Naive thymus-derived CD4-positive, alpha-beta T cell (primary cell): ENCODE measurements at regions of chr10 and their contacts with region 1.

Region 1: GRCh38 chr10:22340362-22341189 is 4.7 kb upstream of the SPAG6 start:
- DNase-seq: peak in 8 of 9 donors; percentile 41 to 80 (median 58)
- ATAC-seq: peak; percentile 59
- H3K4me3 ChIP-seq: peak overlapping the region; percentile 41
- H3K4me3 Mint-ChIP-seq: peak overlapping the region; percentile 80 to 89 (median 86)
- H3K27ac ChIP-seq: peak overlapping the region; percentile 20
- H3K27ac Mint-ChIP-seq: peak overlapping the region; percentile 56 to 93 (median 89)
- H3K4me1 ChIP-seq: peaks cover 24 to 26% of the 10 kb centered on the region in 2 donors
- H3K4me1 Mint-ChIP-seq: peaks cover 0 to 54% (median 18%) of the 10 kb centered on the region in 7 donors
- H3K27me3 ChIP-seq: peaks cover 51 to 91% of the 10 kb centered on the region in 2 donors
- H3K27me3 Mint-ChIP-seq: peaks cover 59 to 79% (median 74%) of the 10 kb centered on the region in 5 donors

Region 2: DNA sequence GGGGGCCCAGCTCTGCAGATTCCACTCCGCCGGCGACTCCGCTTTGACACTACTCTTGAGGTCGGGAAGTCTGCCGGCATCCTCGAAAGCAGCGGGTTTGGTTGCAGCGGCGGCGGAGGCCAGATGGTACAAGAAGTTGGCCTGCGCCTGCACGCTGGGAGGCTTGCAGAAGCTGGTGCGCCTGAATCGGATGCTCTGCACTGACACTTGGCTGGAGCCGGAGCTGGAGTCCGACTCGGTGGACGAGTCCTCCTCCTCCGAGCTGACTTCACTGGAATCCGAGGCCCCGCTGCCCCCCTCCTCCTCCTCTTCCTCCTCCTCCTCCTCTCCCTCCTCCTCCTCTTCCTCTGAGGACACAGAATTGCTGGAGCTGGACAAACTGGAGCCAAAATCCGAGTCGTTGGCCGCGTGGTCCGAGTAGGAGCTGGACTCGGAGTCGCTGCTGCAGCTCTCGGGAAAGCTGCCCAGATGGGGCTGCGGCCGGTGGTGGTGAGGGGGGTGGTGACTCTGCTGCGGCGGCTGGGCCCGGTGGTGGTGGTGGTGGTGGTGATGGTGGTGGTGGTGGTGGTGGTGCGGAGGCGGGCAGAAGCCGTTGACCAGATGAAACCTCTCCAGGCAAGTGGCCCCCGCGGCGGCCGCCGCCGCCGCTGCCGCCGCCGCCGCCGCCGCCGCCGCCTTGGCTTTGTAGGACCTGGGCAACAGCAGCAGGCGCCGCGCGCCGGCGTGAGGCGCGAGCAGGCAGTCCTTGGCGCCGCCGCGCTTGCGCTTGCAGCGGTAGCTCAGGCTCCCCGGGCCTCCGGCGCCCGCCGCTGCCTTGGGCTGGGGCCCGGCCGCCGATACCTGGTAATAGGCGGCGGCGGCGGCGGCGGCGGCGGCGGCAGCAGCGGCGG is 824.1 kb before region 1 on chr10:
- CTCF ChIA-PET with region 1: no interaction called
- POLR2A ChIA-PET with region 1: no interaction called
- intact Hi-C with region 1: loop called in 1 of 2 experiments (anchors 5 kb)
- DNase-seq: peak in 8 of 9 donors; percentile 27 to 59 (median 40)
- ATAC-seq: peak; percentile 85
- H3K4me3 ChIP-seq: peak overlapping the region; percentile 28
- H3K4me3 Mint-ChIP-seq: peak overlapping the region; percentile 60 to 87 (median 80)
- H3K27ac ChIP-seq: no peak overlapping the region
- H3K27ac Mint-ChIP-seq: no peak overlapping the region
- H3K4me1 ChIP-seq: peaks cover 29 to 37% of the 10 kb centered on the region in 2 donors
- H3K4me1 Mint-ChIP-seq: peaks cover 17 to 46% (median 41%) of the 10 kb centered on the region in 7 donors
- H3K27me3 ChIP-seq: peaks cover 53 to 57% of the 10 kb centered on the region in 2 donors
- H3K27me3 Mint-ChIP-seq: peaks cover 68 to 86% (median 85%) of the 10 kb centered on the region in 5 donors

Region 3: GRCh38 chr10:22228943-22229801 is 111.4 kb before region 1 on chr10:
- CTCF ChIA-PET with region 1: interaction called, 3 read pairs
- POLR2A ChIA-PET with region 1: interaction called, 7 read pairs
- intact Hi-C with region 1: loop called (anchors 1 kb)
- DNase-seq: peak; percentile 74 to 94 (median 92)
- ATAC-seq: peak; percentile 95
- H3K4me3 ChIP-seq: peak overlapping the region; percentile 85
- H3K4me3 Mint-ChIP-seq: peak overlapping the region; percentile 84 to 99 (median 94)
- H3K27ac ChIP-seq: peak overlapping the region; percentile 70
- H3K27ac Mint-ChIP-seq: peak overlapping the region; percentile 96 to 100 (median 99)
- H3K4me1 ChIP-seq: peaks cover 6 to 8% of the 10 kb centered on the region in 2 donors
- H3K4me1 Mint-ChIP-seq: peaks cover 11 to 27% (median 15%) of the 10 kb centered on the region in 7 donors
- H3K27me3 ChIP-seq: no peaks in the 10 kb centered on the region
- H3K27me3 Mint-ChIP-seq: peaks cover 0 to 20% (median 5%) of the 10 kb centered on the region in 5 donors

Region 4: GRCh38 chr10:22325272-22326144 is 15.1 kb before region 1 on chr10:
- CTCF ChIA-PET with region 1: interaction called, 4 read pairs
- POLR2A ChIA-PET with region 1: interaction called, 16 read pairs
- intact Hi-C with region 1: loop called (anchors 2 kb)
- DNase-seq: peak; percentile 64 to 85 (median 80)
- ATAC-seq: peak; percentile 59
- H3K4me3 ChIP-seq: peak overlapping the region; percentile 44
- H3K4me3 Mint-ChIP-seq: peak overlapping the region; percentile 80 to 94 (median 88)
- H3K27ac ChIP-seq: peak overlapping the region; percentile 72
- H3K27ac Mint-ChIP-seq: peak overlapping the region; percentile 73 to 95 (median 93)
- H3K4me1 ChIP-seq: peaks cover 6 to 17% of the 10 kb centered on the region in 2 donors
- H3K4me1 Mint-ChIP-seq: peaks cover 17 to 43% (median 38%) of the 10 kb centered on the region in 7 donors
- H3K27me3 ChIP-seq: peaks cover 0 to 5% of the 10 kb centered on the region in 2 donors
- H3K27me3 Mint-ChIP-seq: peaks cover 6 to 50% (median 36%) of the 10 kb centered on the region in 5 donors

Region 5: GRCh38 chr10:22475651-22476600 is 135.3 kb after region 1 on chr10:
- CTCF ChIA-PET with region 1: no interaction called
- POLR2A ChIA-PET with region 1: no interaction called
- intact Hi-C with region 1: loop called in 1 of 2 experiments (anchors 5 kb)
- DNase-seq: peak in 5 of 9 donors; percentile 2 to 65 (median 8)
- ATAC-seq: no peak
- H3K4me3 ChIP-seq: peak overlapping the region; percentile 12
- H3K4me3 Mint-ChIP-seq: peak overlapping the region; percentile 82 to 95 (median 88)
- H3K27ac ChIP-seq: no peak overlapping the region
- H3K27ac Mint-ChIP-seq: peak overlapping the region in 2 of 9 donors; percentile 15 to 80
- H3K4me1 ChIP-seq: peaks cover 6 to 7% of the 10 kb centered on the region in 2 donors
- H3K4me1 Mint-ChIP-seq: peaks cover 5 to 25% (median 17%) of the 10 kb centered on the region in 7 donors
- H3K27me3 ChIP-seq: peaks cover 26 to 29% of the 10 kb centered on the region in 2 donors
- H3K27me3 Mint-ChIP-seq: peaks cover 58 to 70% (median 66%) of the 10 kb centered on the region in 5 donors

Region 6: GRCh38 chr10:23192737-23193434 is 852.3 kb after region 1 on chr10:
- CTCF ChIA-PET with region 1: no interaction called
- POLR2A ChIA-PET with region 1: no interaction called
- intact Hi-C with region 1: loop called in 1 of 2 experiments (anchors 10 kb)
- DNase-seq: no peak
- ATAC-seq: no peak
- H3K4me3 ChIP-seq: no peak overlapping the region
- H3K4me3 Mint-ChIP-seq: peak overlapping the region in 1 of 10 donors; percentile 29
- H3K27ac ChIP-seq: no peak overlapping the region
- H3K27ac Mint-ChIP-seq: no peak overlapping the region
- H3K4me1 ChIP-seq: no peaks in the 10 kb centered on the region
- H3K4me1 Mint-ChIP-seq: peaks cover 0 to 11% (median 4%) of the 10 kb centered on the region in 7 donors
- H3K27me3 ChIP-seq: peaks cover 0 to 16% of the 10 kb centered on the region in 2 donors
- H3K27me3 Mint-ChIP-seq: peaks cover 60 to 83% (median 67%) of the 10 kb centered on the region in 5 donors